B cell (primary cell): ENCODE measurements at regions of chr11 and their contacts with region 1.

Region 1: DNA sequence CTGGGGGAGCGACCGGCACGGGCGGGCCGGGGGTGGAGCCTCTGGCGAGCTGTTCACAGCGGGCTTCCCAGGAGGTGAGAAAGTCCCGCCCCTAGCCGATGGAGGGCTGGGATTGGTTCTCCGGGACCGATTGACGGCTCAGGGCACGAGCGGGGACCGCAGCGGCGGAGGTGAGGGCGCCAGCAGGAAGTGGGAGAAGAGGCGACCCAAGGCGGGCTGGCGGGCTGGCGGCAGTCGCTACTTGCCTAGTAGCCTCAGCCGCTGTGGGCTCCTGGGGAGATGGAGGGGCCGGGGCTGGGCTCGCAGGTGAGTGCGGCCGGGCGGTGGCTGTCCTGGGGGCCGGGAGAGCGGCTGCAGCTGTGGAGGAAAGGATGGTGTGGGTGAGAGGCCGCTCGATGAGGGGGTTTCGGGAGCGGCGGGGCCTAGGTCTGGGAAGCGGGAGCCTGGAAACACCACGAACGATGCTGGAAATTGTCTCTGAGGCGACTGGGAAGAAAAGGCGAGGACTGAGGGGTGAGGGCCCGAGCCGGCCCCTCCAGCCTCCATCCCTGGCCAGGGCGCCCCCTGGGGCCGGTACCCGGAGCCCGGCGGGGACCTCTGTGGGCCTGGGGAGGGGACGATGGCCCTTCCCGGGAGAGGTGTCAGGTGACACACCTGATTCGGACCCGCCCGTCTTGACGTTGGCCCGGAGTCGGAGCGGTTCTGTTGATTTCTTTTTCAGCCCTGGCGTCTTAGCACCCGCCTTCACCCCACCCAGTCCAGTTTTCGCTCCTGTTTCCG is at the start of gene ZDHHC13:
- DNase-seq: peak; percentile 92
- ATAC-seq: peak; percentile 99
- H3K4me3 ChIP-seq: peak within 1 kb of the TSS; percentile 19 to 90 (median 87)
- H3K4me3 Mint-ChIP-seq: peak within 1 kb of the TSS; percentile 96
- H3K27ac ChIP-seq: peak within 1 kb of the TSS; percentile 14 to 83
- H3K27ac Mint-ChIP-seq: peak within 1 kb of the TSS; percentile 87
- H3K4me1 ChIP-seq: peaks cover 17 to 19% of the 10 kb centered on the region in 2 donors
- H3K4me1 Mint-ChIP-seq: peaks cover 51% of the 10 kb centered on the region
- H3K27me3 ChIP-seq: no peaks in the 10 kb centered on the region
- H3K27me3 Mint-ChIP-seq: no peaks in the 10 kb centered on the region
- CTCF ChIP-seq: peak; percentile 15
- total RNA-seq, gene ZDHHC13: 21.7 and 24.6 TPM in 2 replicates

Region 2: GRCh38 chr11:17207317-17208258 is 1909.6 kb before region 1 on chr11 and contains the start of gene PIK3C2A:
- CTCF ChIA-PET with region 1: no interaction called
- POLR2A ChIA-PET with region 1: no interaction called
- intact Hi-C with region 1: loop called (anchors 10 kb)
- DNase-seq: peak; percentile 95
- ATAC-seq: peak; percentile 96
- H3K4me3 ChIP-seq: peak within 1 kb of the TSS; percentile 82 to 99 (median 96)
- H3K4me3 Mint-ChIP-seq: peak within 1 kb of the TSS; percentile 98
- H3K27ac ChIP-seq: peak within 1 kb of the TSS; percentile 96 to 98
- H3K27ac Mint-ChIP-seq: peak within 1 kb of the TSS; percentile 94
- H3K4me1 ChIP-seq: peaks cover 22 to 29% of the 10 kb centered on the region in 2 donors
- H3K4me1 Mint-ChIP-seq: peaks cover 38% of the 10 kb centered on the region
- H3K27me3 ChIP-seq: no peaks in the 10 kb centered on the region
- H3K27me3 Mint-ChIP-seq: no peaks in the 10 kb centered on the region
- CTCF ChIP-seq: no peak
- total RNA-seq, gene PIK3C2A: 48.8 and 54.9 TPM in 2 replicates

Region 3: GRCh38 chr11:19076744-19077589 is 40.2 kb before region 1 on chr11:
- CTCF ChIA-PET with region 1: interaction called, 4 read pairs
- POLR2A ChIA-PET with region 1: no interaction called
- intact Hi-C with region 1: loop called (anchors 2 kb)
- DNase-seq: peak; percentile 62
- ATAC-seq: peak; percentile 79
- H3K4me3 ChIP-seq: no peak overlapping the region
- H3K4me3 Mint-ChIP-seq: no peak overlapping the region
- H3K27ac ChIP-seq: no peak overlapping the region
- H3K27ac Mint-ChIP-seq: no peak overlapping the region
- H3K4me1 ChIP-seq: peaks cover 0 to 4% of the 10 kb centered on the region in 2 donors
- H3K4me1 Mint-ChIP-seq: no peaks in the 10 kb centered on the region
- H3K27me3 ChIP-seq: peaks cover 0 to 6% (median 2%) of the 10 kb centered on the region in 4 experiments
- H3K27me3 Mint-ChIP-seq: peaks cover 24% of the 10 kb centered on the region
- CTCF ChIP-seq: peak; percentile 100

Region 4: GRCh38 chr11:19240420-19241259 is 123.5 kb after region 1 on chr11 and contains the start of gene E2F8:
- CTCF ChIA-PET with region 1: interaction called, 3 read pairs
- POLR2A ChIA-PET with region 1: no interaction called
- intact Hi-C with region 1: loop called (anchors 2 kb)
- DNase-seq: peak; percentile 87
- ATAC-seq: peak; percentile 95
- H3K4me3 ChIP-seq: peak within 1 kb of the TSS; percentile 49 to 91 (median 66)
- H3K4me3 Mint-ChIP-seq: peak within 1 kb of the TSS; percentile 96
- H3K27ac ChIP-seq: no peak within 1 kb of the TSS
- H3K27ac Mint-ChIP-seq: peak within 1 kb of the TSS; percentile 73
- H3K4me1 ChIP-seq: peaks cover 20 to 22% of the 10 kb centered on the region in 2 donors
- H3K4me1 Mint-ChIP-seq: peaks cover 20% of the 10 kb centered on the region
- H3K27me3 ChIP-seq: peaks cover 0 to 44% (median 27%) of the 10 kb centered on the region in 4 experiments
- H3K27me3 Mint-ChIP-seq: peaks cover 37% of the 10 kb centered on the region
- CTCF ChIP-seq: no peak
- total RNA-seq, gene E2F8: 0.22 TPM in 1 of 2 replicates, not detected in the other

Region 5: DNA sequence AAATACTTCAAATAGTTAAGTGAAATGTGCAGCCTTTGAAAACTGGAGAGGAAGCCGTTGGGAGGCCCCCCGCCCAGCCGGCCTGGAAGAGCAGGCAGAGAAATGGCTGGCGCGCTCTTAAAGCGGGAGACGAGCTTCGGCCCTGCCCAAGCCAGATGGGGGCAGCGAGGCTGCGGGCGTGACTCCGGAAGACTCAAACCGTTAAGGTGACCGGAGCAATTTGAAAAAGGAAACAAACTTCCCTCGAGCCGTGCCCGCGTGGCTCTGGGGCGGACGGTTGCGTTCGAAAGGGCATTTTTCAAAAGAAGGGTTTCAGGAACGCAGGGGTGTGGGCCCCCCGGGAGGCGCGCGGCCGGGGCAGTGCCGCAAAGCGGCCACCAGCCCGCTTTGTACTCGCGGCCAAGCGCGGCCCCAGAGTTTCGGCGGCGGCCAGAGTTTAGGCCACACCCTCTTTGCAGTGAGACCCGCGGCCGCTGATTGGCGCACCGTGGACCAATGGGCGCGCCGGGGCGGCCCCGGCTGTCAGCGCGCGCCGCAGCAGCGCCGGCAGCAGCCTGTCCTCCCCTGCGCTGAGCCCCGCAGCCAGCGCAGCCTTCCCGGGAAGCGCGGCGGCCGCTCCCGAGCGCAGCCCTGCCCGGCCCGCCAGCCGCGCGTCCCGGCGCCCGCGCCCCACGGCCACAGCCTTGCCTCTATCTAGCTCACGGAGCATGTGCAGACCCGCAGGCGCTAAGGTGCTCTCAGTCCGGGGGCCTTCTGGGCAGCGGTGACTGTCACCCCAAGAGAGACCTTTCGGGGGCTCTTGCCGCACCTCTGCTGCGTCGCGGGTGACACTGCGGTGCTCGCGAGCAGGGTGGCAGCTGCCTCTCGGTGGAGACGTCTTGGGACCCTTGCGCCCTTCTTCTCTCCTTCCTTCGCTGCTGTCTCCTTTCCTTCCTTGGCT is 595.4 kb after region 1 on chr11 and contains the start of gene NAV2:
- CTCF ChIA-PET with region 1: no interaction called
- POLR2A ChIA-PET with region 1: no interaction called
- intact Hi-C with region 1: loop called (anchors 10 kb)
- DNase-seq: peak; percentile 81
- ATAC-seq: peak; percentile 99
- H3K4me3 ChIP-seq: peak within 1 kb of the TSS; percentile 26 to 77 (median 68)
- H3K4me3 Mint-ChIP-seq: peak within 1 kb of the TSS; percentile 96
- H3K27ac ChIP-seq: peak within 1 kb of the TSS in 1 of 2 donors; percentile 47
- H3K27ac Mint-ChIP-seq: peak within 1 kb of the TSS; percentile 61
- H3K4me1 ChIP-seq: peaks cover 26 to 30% of the 10 kb centered on the region in 2 donors
- H3K4me1 Mint-ChIP-seq: peaks cover 26% of the 10 kb centered on the region
- H3K27me3 ChIP-seq: peaks cover 0 to 46% (median 26%) of the 10 kb centered on the region in 4 experiments
- H3K27me3 Mint-ChIP-seq: peaks cover 40% of the 10 kb centered on the region
- CTCF ChIP-seq: no peak
- total RNA-seq, gene NAV2: 19.8 and 22.2 TPM in 2 replicates

Region 6: DNA sequence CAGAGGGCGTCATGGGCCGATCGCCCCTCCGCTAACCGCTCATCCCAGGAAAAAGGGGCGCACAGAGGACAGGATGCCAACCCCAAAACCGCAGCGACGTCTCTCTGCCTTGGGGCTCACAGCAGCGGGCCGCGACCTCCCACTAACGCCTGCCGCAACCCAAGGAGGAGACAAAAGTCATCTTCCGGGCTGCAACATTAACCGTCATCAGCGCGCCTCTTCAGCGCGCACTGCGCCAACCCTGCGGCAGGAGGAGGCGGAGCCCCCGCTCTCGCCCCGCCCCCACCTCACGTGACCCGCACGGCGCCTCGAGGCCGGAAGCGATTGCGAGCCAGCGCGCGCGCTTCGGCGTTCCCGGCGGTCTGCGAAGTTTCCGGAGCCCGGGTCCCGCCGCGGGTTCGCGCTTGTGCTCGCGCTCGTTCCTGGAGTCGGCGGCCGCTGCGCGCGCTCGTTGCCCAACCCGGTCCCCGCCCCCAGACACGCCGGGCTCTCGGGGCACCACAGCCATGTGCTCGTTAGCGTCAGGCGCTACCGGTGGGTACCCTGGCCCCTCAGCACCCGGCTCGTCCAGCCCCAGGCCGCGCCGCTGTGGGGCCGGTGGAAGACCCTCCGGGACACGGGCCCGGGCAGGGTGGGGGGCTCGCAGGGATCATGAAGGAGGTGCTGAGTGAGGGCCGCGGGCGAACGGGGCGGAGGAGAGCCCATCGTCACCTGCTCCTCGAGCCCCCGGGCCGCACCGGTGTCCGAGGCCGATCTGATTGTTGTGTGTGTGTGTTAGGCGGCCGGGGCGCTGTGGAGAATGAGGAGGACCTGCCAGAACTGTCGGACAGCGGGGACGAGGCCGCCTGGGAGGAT is 1270.3 kb after region 1 on chr11 and contains the start of gene PRMT3:
- CTCF ChIA-PET with region 1: no interaction called
- POLR2A ChIA-PET with region 1: no interaction called
- intact Hi-C with region 1: loop called (anchors 5 kb)
- DNase-seq: peak; percentile 99
- ATAC-seq: peak; percentile 86
- H3K4me3 ChIP-seq: peak within 1 kb of the TSS; percentile 72 to 95 (median 92)
- H3K4me3 Mint-ChIP-seq: peak within 1 kb of the TSS; percentile 96
- H3K27ac ChIP-seq: peak within 1 kb of the TSS; percentile 82 to 92
- H3K27ac Mint-ChIP-seq: peak within 1 kb of the TSS; percentile 100
- H3K4me1 ChIP-seq: peaks cover 11 to 15% of the 10 kb centered on the region in 2 donors
- H3K4me1 Mint-ChIP-seq: peaks cover 23% of the 10 kb centered on the region
- H3K27me3 ChIP-seq: no peaks in the 10 kb centered on the region
- H3K27me3 Mint-ChIP-seq: no peaks in the 10 kb centered on the region
- CTCF ChIP-seq: peak; percentile 92
- total RNA-seq, gene PRMT3: 18.3 and 19.8 TPM in 2 replicates